CD14-positive monocyte (primary cell): ENCODE measurements at regions of chr14 and their contacts with region 1.

Region 1: DNA sequence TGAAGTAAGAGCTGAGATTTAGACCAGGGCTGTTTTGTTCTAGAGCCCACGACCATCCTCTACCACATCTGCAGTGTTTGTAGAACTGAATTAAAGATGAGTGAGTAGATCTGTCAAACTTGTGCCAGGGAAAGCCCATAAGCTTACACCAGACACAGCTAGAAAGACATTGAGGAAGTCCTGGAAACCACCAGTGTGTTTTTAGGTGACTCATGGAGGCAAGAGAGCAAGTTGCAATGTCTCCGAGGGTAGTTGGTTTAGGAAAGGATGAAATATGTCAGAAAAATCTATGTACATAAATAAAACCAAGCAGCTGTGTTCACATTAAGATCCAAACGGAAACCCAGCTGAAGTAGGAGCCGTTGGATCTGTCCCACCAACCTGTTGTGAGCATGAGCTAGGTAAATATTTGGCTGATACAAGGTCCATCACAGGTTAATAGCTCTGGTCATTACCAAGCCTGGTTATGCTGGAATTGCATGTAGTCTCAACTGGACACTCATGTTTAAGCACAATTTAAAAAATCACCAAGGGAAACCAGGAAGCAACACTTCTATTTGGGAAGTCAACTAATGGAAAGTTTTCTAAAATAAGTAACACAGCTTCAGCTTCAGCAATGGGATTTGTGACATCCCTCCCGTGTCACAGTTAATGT is 49.9 kb upstream of the PLEKHG3 start:
- DNase-seq: peak; percentile 90 to 98 (median 94)
- H3K4me3 ChIP-seq: peak overlapping the region in 1 of 3 experiments; percentile 24
- H3K4me3 Mint-ChIP-seq: peak overlapping the region in 1 of 2 donors; percentile 75
- H3K27ac ChIP-seq: peak overlapping the region; percentile 15 to 94
- H3K27ac Mint-ChIP-seq: peak overlapping the region; percentile 83 to 96 (median 93)
- H3K4me1 ChIP-seq: peaks cover 19 to 33% of the 10 kb centered on the region in 2 donors
- H3K4me1 Mint-ChIP-seq: peaks cover 34% of the 10 kb centered on the region
- H3K27me3 ChIP-seq: peaks cover under 1 to 6% of the 10 kb centered on the region in 2 donors
- H3K27me3 Mint-ChIP-seq: peaks cover 15 to 20% (median 17%) of the 10 kb centered on the region in 3 donors
- CTCF ChIP-seq: no peak

Region 2: GRCh38 chr14:64503478-64504309 is 150.7 kb before region 1 on chr14 and contains the start of gene ZBTB25:
- intact Hi-C with region 1: loop called in 1 of 2 experiments (anchors 10 kb)
- DNase-seq: peak; percentile 90 to 98 (median 95)
- H3K4me3 ChIP-seq: peak within 1 kb of the TSS; percentile 49 to 91 (median 87)
- H3K4me3 Mint-ChIP-seq: peak within 1 kb of the TSS; percentile 96
- H3K27ac ChIP-seq: peak within 1 kb of the TSS; percentile 99
- H3K27ac Mint-ChIP-seq: peak within 1 kb of the TSS; percentile 97 to 99 (median 99)
- H3K4me1 ChIP-seq: peaks cover 49 to 67% of the 10 kb centered on the region in 2 donors
- H3K4me1 Mint-ChIP-seq: peaks cover 58% of the 10 kb centered on the region
- H3K27me3 ChIP-seq: no peaks in the 10 kb centered on the region
- H3K27me3 Mint-ChIP-seq: no peaks in the 10 kb centered on the region
- CTCF ChIP-seq: no peak
- polyA plus RNA-seq, gene ZBTB25: 3.2 to 8.7 (median 3.9) TPM

Region 3: GRCh38 chr14:64914237-64914971 is 260.0 kb after region 1 on chr14 and contains the start of gene CHURC1:
- intact Hi-C with region 1: loop called in 1 of 2 experiments (anchors 10 kb)
- DNase-seq: peak; percentile 95 to 98 (median 97)
- H3K4me3 ChIP-seq: peak within 1 kb of the TSS; percentile 89 to 97 (median 93)
- H3K4me3 Mint-ChIP-seq: peak within 1 kb of the TSS; percentile 81 to 92
- H3K27ac ChIP-seq: peak within 1 kb of the TSS; percentile 93 to 98
- H3K27ac Mint-ChIP-seq: peak within 1 kb of the TSS; percentile 92 to 97 (median 95)
- H3K4me1 ChIP-seq: peaks cover 21 to 24% of the 10 kb centered on the region in 2 donors
- H3K4me1 Mint-ChIP-seq: peaks cover 30% of the 10 kb centered on the region
- H3K27me3 ChIP-seq: peaks cover 0 to 2% of the 10 kb centered on the region in 2 donors
- H3K27me3 Mint-ChIP-seq: peaks cover 3 to 7% (median 6%) of the 10 kb centered on the region in 3 donors
- CTCF ChIP-seq: no peak
- polyA plus RNA-seq, gene CHURC1: 31.1 to 98.3 (median 81.2) TPM